ENCODE measurements at regions of chr2 and their contacts with region 1.

Region 1: DNA sequence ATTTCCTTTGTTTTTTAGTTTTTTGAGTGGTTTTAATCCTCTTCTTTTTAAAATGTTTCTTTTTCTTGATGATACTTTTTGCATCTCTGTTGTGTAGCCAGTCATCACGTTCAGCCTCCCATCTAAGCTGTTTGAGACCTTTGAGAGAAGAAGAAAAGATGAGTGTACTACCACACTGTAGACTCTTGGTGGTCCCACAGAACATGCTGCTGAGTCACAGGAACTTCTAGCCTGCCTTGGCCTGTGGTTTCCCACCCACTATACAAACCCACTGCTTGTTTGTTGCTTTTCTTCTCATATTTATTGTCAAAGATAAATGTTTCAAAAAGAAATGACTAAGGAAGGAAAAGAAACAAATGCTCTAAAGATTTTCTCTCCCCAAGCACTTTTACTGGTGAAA is 5.5 kb downstream of the CEBPZOS start:
- DNase-seq: peak; percentile 45
- H3K4me3 Mint-ChIP-seq: no peak overlapping the region
- H3K27ac Mint-ChIP-seq: peak overlapping the region; percentile 64
- H3K4me1 Mint-ChIP-seq: peaks cover 31% of the 10 kb centered on the region
- H3K27me3 Mint-ChIP-seq: no peaks in the 10 kb centered on the region

Region 2: GRCh38 chr2:37244017-37244416 is 42.3 kb after region 1 on chr2:
- CTCF ChIA-PET with region 1: no interaction called
- POLR2A ChIA-PET with region 1: interaction called, 4 read pairs
- intact Hi-C with region 1: loop called (anchors 2 kb)
- DNase-seq: no peak
- H3K4me3 Mint-ChIP-seq: no peak overlapping the region
- H3K27ac Mint-ChIP-seq: peak overlapping the region; percentile 14
- H3K4me1 Mint-ChIP-seq: peaks cover 24% of the 10 kb centered on the region
- H3K27me3 Mint-ChIP-seq: no peaks in the 10 kb centered on the region